Dorsolateral prefrontal cortex (tissue), 120 donors: ENCODE measurements at regions of chr1 and their contacts with region 1.

Region 1: GRCh38 chr1:242673652-242674051 is 149.2 kb upstream of the PLD5 start:
- DNase-seq: no peak
- H3K4me3 ChIP-seq: peak overlapping the region in 3 of 59 donors; percentile 19 to 20 (median 20)
- H3K27ac ChIP-seq: peak overlapping the region in 58 of 59 donors; percentile 32 to 94 (median 82)
- H3K27me3 ChIP-seq: peaks cover 0 to 3% (median 0%) of the 10 kb centered on the region in 45 donors
- CTCF ChIP-seq: peak in 2 of 56 donors; percentile 20 to 24

Region 2: DNA sequence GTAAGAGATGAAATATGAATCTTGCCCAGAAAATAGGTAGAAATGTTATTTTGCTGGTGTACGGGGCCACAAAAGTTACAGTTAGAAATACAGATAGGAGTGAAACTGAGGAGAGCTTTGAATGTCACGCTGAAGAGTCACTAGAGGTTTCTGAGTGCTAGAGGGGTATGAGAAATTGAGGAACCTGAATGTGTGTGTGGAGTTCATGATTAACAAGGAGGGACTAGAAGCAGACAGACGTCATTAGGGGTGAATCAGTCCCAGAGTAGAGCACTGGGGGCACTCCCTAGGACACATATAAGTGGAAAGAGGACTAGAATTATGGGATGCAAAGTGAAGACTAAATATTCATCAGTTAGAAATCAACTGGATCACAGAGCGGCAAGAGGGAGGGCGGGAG is 485.8 kb before region 1 on chr1:
- intact Hi-C with region 1: no loop called
- DNase-seq: no peak
- H3K4me3 ChIP-seq: no peak overlapping the region
- H3K27ac ChIP-seq: peak overlapping the region in 1 of 59 donors; percentile 5
- H3K27me3 ChIP-seq: no peaks in the 10 kb centered on the region
- CTCF ChIP-seq: no peak

Region 3: GRCh38 chr1:242523719-242524570 is 149.7 kb before region 1 on chr1:
- intact Hi-C with region 1: loop called in 1 of 2 experiments (anchors 5 kb)
- DNase-seq: peak; percentile 53 to 83 (median 66)
- H3K4me3 ChIP-seq: peak overlapping the region; percentile 46 to 84 (median 70)
- H3K27ac ChIP-seq: peak overlapping the region in 31 of 59 donors; percentile 4 to 79 (median 51)
- H3K27me3 ChIP-seq: peaks cover 0 to 20% (median 4%) of the 10 kb centered on the region in 45 donors
- CTCF ChIP-seq: peak in 20 of 56 donors; percentile 3 to 35 (median 18)

Region 4: GRCh38 chr1:242784074-242784473 is 110.4 kb after region 1 on chr1:
- intact Hi-C with region 1: loop called in 1 of 2 experiments (anchors 10 kb)
- DNase-seq: peak in 1 of 10 donors; percentile 12
- H3K4me3 ChIP-seq: peak overlapping the region in 5 of 59 donors; percentile 2 to 31 (median 21)
- H3K27ac ChIP-seq: peak overlapping the region in 20 of 59 donors; percentile 6 to 79 (median 34)
- H3K27me3 ChIP-seq: no peaks in the 10 kb centered on the region
- CTCF ChIP-seq: no peak